ENCODE measurements at regions of chr14 and their contacts with region 1.

Region 1: GRCh38 chr14:50109342-50109741 is 7.0 kb downstream of the VCPKMT start:
- DNase-seq: no peak
- H3K4me3 ChIP-seq: no peak overlapping the region
- H3K27ac ChIP-seq: no peak overlapping the region
- H3K4me1 ChIP-seq: no peaks in the 10 kb centered on the region
- H3K27me3 ChIP-seq: no peaks in the 10 kb centered on the region
- CTCF ChIP-seq: no peak
- POLR2A ChIP-seq: no peak

Region 2: DNA sequence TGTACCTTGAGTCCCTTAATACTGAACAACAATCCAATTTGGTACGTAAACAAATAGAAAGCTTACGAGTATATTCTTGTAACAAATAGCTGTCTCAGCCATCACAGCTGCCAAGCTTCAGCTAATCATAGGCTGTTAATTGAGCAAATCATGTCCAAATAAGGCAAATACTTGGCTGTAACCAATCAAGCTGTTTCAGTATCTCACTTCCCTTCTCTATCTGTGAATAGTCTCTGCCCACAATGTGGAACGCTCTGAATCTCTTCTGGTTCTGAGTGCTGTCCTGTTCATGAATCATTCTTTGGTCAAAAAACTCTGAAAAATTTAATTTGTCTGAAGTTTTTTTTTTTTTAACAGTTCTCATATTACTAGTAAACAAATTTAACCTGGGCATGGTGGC is 251.0 kb before region 1 on chr14:
- intact Hi-C with region 1: loop called in 1 of 2 experiments (anchors 5 kb)
- DNase-seq: no peak
- H3K4me3 ChIP-seq: no peak overlapping the region
- H3K27ac ChIP-seq: no peak overlapping the region
- H3K4me1 ChIP-seq: no peaks in the 10 kb centered on the region
- H3K27me3 ChIP-seq: no peaks in the 10 kb centered on the region
- CTCF ChIP-seq: no peak
- POLR2A ChIP-seq: no peak

Region 3: GRCh38 chr14:49867831-49868723 is 241.3 kb before region 1 on chr14:
- intact Hi-C with region 1: loop called in 1 of 2 experiments (anchors 5 kb)
- DNase-seq: peak; percentile 96 to 98 (median 97)
- H3K4me3 ChIP-seq: peak overlapping the region; percentile 7 to 64 (median 50)
- H3K27ac ChIP-seq: peak overlapping the region; percentile 70 to 89 (median 87)
- H3K4me1 ChIP-seq: peaks cover 9 to 13% of the 10 kb centered on the region in 2 donors
- H3K27me3 ChIP-seq: no peaks in the 10 kb centered on the region
- CTCF ChIP-seq: no peak
- POLR2A ChIP-seq: peak; percentile 61 to 87

Region 4: GRCh38 chr14:49879683-49880204 is 229.6 kb before region 1 on chr14:
- intact Hi-C with region 1: loop called (anchors 5 to 10 kb)
- DNase-seq: peak; percentile 37 to 77 (median 61)
- H3K4me3 ChIP-seq: no peak overlapping the region
- H3K27ac ChIP-seq: no peak overlapping the region
- H3K4me1 ChIP-seq: no peaks in the 10 kb centered on the region
- H3K27me3 ChIP-seq: no peaks in the 10 kb centered on the region
- CTCF ChIP-seq: peak; percentile 47 to 73 (median 60)
- POLR2A ChIP-seq: no peak

Region 5: DNA sequence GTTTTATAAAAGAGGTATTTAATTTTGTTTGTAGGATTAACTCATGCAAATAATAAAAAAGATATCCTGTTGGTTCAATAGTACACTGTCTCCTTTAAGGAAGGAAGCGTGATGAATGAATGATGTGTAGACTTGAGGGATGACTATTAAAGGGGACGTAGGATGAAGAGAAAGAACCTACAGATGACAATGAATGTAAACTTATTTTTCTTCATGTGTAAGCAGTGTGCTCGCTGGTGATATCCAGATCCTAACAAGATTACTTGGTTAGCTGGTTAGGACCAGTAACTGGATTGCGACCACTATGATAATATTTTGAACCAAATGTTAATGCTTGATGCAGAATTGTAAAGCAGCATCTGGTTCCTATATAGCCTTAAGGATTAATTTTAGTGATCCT is 213.9 kb before region 1 on chr14:
- intact Hi-C with region 1: no loop called
- DNase-seq: no peak
- H3K4me3 ChIP-seq: peak overlapping the region in 2 of 4 donors; percentile 30 to 75
- H3K27ac ChIP-seq: peak overlapping the region in 2 of 5 donors; percentile 2 to 99
- H3K4me1 ChIP-seq: peaks cover 33 to 51% of the 10 kb centered on the region in 2 donors
- H3K27me3 ChIP-seq: no peaks in the 10 kb centered on the region
- CTCF ChIP-seq: no peak
- POLR2A ChIP-seq: no peak

Measured in adrenal gland (tissue), 19 donors.